ENCODE measurements at regions of chr22 and their contacts with region 1.

Region 1: DNA sequence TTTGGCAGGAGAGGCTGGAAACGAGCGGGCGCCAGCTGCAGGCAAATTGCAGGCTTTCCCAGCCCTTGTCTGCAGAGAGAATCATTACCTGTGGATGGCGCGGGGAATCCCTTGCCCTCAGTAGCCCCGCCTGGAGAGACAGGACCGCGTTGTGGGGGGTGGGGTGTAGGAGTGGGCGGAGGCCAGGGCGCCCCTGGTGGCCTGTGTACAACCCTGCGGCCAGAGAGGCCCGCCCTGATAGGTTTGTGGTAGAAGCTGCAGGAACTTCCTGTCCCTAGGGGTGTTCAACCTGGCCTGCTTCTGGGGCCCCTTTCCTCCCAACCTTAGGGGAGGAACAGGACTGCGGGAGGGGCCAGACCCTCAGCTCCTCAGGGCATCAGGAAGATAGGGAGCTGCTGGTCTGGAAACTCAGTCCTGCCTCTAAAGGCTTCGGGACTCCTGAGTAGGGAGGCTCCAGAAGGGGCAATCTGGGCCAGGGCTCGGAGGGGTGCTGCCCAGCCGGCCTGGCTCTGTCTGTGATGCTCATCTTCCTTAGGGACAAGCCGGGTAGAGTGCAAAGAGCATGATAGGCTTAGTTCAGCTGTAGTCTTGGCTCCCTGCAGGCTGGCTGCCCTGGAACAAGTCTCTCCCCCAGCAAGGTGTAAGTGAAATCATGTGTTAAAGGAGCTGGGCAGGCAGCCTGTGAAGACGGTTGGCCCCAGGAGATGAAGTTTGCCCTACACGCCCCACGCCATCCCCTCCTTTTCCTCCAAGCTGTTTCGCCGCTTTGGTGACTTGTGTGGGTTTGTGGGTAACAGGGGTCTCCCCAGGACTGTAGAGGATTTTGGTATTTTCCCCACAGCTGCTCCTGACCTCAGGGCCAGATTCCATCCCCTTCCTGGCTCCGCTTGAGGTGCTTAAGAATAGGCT is 24.1 kb upstream of the SUSD2 start:
- DNase-seq: peak; percentile 80 to 93
- H3K4me3 ChIP-seq: peak overlapping the region; percentile 23 to 62 (median 52); a peak in 7 of 8 replicates
- H3K27ac ChIP-seq: peak overlapping the region; percentile 7; the same call in 1 of the 2 replicates
- H3K4me1 ChIP-seq: peaks cover 0 to 22% (median 12%) of the 10 kb centered on the region in 4 experiments; a peak in 6 of 7 replicates
- H3K27me3 ChIP-seq: peaks cover 0 to 6% (median 1%) of the 10 kb centered on the region in 4 experiments; a peak in 3 of 7 replicates
- CTCF ChIP-seq: peak; percentile 87 to 97 (median 92)
- EP300 ChIP-seq: no peak
- POLR2A ChIP-seq: no peak
- RAD21 ChIP-seq: peak in 1 of 2 experiments; percentile 37; a peak in 2 of 4 replicates

Region 2: GRCh38 chr22:24106385-24107381 is 50.5 kb before region 1 on chr22:
- CTCF ChIA-PET with region 1: interaction called, 35 read pairs
- POLR2A ChIA-PET with region 1: no interaction called
- DNase-seq: peak in 1 of 2 experiments; percentile 49
- H3K4me3 ChIP-seq: no peak overlapping the region
- H3K27ac ChIP-seq: no peak overlapping the region
- H3K4me1 ChIP-seq: no peaks in the 10 kb centered on the region
- H3K27me3 ChIP-seq: no peaks in the 10 kb centered on the region
- CTCF ChIP-seq: peak; percentile 25 to 35 (median 28); a peak in 3 of 4 replicates
- EP300 ChIP-seq: no peak
- POLR2A ChIP-seq: no peak
- RAD21 ChIP-seq: peak; percentile 37 to 53; a peak in 3 of 4 replicates

Region 3: DNA sequence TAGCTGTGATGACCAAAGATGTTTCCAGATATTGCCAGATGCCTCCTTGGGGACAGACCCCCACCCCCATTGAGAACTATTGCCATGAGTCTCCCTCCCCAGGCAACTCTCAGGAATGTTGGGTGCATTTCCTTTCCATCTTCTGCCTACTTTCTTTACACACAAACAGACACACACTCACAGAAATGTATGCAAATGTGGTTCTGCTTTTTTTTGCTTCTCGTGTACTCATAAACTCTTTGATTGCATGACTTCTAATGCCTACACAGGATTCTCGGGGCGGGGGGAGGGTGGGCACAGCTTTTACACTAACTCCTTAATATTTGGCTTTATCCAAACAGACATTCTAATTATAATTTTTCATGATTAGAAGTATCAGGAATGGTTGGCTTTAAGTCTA is 29.1 kb before region 1 on chr22:
- CTCF ChIA-PET with region 1: interaction called, 102 read pairs
- POLR2A ChIA-PET with region 1: interaction called, 3 read pairs
- DNase-seq: no peak
- H3K4me3 ChIP-seq: no peak overlapping the region
- H3K27ac ChIP-seq: no peak overlapping the region
- H3K4me1 ChIP-seq: no peaks in the 10 kb centered on the region
- H3K27me3 ChIP-seq: no peaks in the 10 kb centered on the region
- CTCF ChIP-seq: no peak
- EP300 ChIP-seq: no peak
- POLR2A ChIP-seq: no peak
- RAD21 ChIP-seq: no peak

Region 4: GRCh38 chr22:24140357-24140756 is 16.8 kb before region 1 on chr22:
- CTCF ChIA-PET with region 1: interaction called, 102 read pairs
- POLR2A ChIA-PET with region 1: interaction called, 3 read pairs
- DNase-seq: no peak
- H3K4me3 ChIP-seq: no peak overlapping the region
- H3K27ac ChIP-seq: no peak overlapping the region; the same call in 1 of the 2 replicates
- H3K4me1 ChIP-seq: no peaks in the 10 kb centered on the region; a peak in 1 of 7 replicates
- H3K27me3 ChIP-seq: no peaks in the 10 kb centered on the region
- CTCF ChIP-seq: no peak
- EP300 ChIP-seq: no peak
- POLR2A ChIP-seq: no peak
- RAD21 ChIP-seq: no peak

Region 5: DNA sequence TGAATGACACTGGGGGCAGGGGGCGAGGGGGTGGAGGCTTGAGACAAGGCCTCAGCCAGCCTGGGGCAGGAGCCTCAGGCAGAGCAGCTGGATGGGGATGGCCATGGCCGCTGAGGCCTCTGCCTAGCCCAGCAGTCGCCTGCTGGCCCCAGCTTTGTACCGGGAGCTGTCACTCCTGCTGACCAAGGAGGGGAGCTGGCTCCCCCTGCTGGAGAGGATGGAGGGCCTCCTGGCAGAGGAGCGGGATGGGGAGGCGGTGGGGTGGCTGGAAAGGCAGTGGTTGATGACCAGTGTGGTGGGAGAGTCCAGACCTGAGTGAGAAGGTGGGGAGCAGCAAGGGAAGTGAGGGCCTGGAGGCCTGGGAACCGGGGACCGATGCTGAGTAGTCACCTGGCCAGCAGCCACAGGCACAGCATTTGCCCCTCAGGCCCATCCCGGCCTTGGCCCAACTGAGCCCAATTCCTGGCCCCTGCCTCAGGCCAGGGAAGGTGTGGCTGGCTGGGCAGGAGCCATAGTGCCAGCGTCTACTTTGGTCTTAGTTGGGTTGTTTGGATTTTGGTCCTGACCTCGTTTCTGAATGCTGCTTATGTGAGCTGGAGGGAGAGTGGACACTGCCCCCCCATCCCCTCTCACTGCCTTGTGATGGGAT is 18.1 kb after region 1 on chr22:
- CTCF ChIA-PET with region 1: interaction called, 301 read pairs
- POLR2A ChIA-PET with region 1: interaction called, 5 read pairs
- DNase-seq: peak; percentile 46 to 94
- H3K4me3 ChIP-seq: no peak overlapping the region
- H3K27ac ChIP-seq: no peak overlapping the region
- H3K4me1 ChIP-seq: no peaks in the 10 kb centered on the region; a peak in 1 of 7 replicates
- H3K27me3 ChIP-seq: no peaks in the 10 kb centered on the region
- CTCF ChIP-seq: peak; percentile 94 to 97 (median 94)
- EP300 ChIP-seq: peak in 1 of 2 experiments; percentile 13; a peak in 1 of 3 replicates
- POLR2A ChIP-seq: no peak
- RAD21 ChIP-seq: peak; percentile 84 to 92

Region 6: DNA sequence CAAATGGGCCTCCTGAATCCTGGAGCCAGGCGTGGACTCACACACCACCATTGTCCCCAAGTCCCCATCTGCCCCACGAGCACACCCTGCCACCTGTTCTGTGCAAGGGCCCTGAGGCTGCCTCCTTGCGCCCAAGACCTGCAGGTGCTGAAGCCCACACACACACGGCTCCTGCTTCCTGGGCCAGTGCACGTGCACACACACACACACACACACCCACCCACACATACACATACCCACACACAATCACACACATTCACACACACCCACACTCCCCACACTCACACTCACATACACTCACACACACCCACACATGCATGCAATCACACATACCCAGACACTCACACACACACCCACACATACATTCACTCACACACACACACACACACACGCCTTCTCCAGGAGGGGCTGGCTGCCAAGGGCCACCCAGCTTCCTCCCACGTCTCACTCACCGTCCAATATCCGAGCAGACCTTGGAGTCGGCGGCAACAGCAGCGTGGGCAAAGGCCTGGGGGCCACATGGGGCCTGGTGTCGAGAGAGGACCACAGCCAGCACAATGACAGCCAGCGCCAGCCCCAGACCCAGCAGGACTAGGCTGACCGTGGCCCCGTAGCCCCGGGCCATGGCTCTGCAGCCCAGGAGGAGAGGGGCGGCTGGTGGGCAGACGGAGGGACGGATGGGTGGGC is 87.1 kb after region 1 on chr22:
- CTCF ChIA-PET with region 1: interaction called, 11 read pairs
- POLR2A ChIA-PET with region 1: no interaction called
- DNase-seq: no peak
- H3K4me3 ChIP-seq: no peak overlapping the region
- H3K27ac ChIP-seq: no peak overlapping the region
- H3K4me1 ChIP-seq: peaks cover 0 to 3% (median 0%) of the 10 kb centered on the region in 4 experiments; a peak in 2 of 7 replicates
- H3K27me3 ChIP-seq: no peaks in the 10 kb centered on the region; a peak in 1 of 7 replicates
- CTCF ChIP-seq: no peak
- EP300 ChIP-seq: no peak
- POLR2A ChIP-seq: no peak
- RAD21 ChIP-seq: no peak